ENCODE measurements at regions of chr9 and their contacts with region 1.

Region 1: GRCh38 chr9:104991144-104991953 is 63.4 kb upstream of the ABCA1 start:
- DNase-seq: peak; percentile 83
- H3K4me3 ChIP-seq: peak overlapping the region; percentile 61 to 83 (median 76)
- H3K27ac ChIP-seq: peak overlapping the region; percentile 34
- H3K4me1 ChIP-seq: peaks cover 4% of the 10 kb centered on the region
- H3K27me3 ChIP-seq: no peaks in the 10 kb centered on the region
- CTCF ChIP-seq: no peak
- POLR2A ChIP-seq: peak; percentile 50

Region 2: DNA sequence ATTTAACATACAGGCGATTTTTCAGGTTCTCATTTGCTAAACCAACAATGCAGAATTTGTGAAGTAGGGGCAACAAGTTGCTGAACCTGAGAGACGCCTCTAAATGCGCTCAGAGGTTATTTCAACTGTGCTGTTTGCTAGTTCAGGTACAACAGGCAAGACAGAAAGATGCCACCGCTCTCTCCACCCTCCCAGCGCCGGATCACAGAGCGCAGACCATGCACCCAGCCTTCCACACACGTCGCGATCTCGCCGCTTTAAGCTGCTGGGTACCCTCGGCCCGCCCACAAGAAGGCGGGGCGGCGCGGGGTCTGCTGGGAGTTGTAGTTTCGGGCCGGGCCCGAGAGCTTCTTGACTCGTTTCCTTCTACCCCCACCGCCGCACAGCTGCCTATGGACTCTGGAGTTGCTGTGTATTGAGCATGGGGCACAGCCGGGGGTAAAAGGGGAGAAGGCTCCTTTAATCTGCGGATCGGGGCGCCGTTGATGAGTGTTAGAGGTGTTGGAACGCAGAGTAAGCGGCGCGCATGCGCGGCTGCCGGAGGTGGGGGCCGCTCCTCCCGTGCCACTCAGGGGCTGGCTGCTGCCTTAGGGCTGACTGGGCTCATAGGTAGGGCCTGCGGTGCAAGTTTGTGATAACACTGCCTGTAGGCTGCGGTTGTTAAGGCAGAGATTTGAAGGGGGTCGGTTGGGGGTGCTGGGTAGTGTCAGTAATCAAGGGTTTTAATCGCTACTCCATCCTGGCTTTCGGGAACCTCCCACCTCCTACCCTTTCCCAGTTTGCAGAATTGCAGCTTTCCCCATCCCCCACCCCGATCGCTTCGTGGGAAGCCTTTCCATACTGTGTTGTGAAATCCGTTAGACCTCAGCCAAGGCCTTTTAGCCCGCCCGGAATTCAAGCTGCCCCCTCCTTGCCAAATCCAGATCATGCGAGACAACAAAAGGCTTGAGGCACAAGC is 23.0 kb before region 1 on chr9:
- CTCF ChIA-PET with region 1: interaction called, 6 read pairs
- POLR2A ChIA-PET with region 1: interaction called, 4 read pairs
- dilution Hi-C with region 1: no loop called
- intact Hi-C with region 1: loop called (anchors 1 kb)
- DNase-seq: peak; percentile 86
- H3K4me3 ChIP-seq: peak overlapping the region; percentile 63 to 93 (median 87)
- H3K27ac ChIP-seq: peak overlapping the region; percentile 58
- H3K4me1 ChIP-seq: peaks cover 6% of the 10 kb centered on the region
- H3K27me3 ChIP-seq: peaks cover 3% of the 10 kb centered on the region in 2 experiments
- CTCF ChIP-seq: no peak
- POLR2A ChIP-seq: no peak

Region 3: GRCh38 chr9:105127863-105128220 is 136.5 kb after region 1 on chr9:
- CTCF ChIA-PET with region 1: no interaction called
- POLR2A ChIA-PET with region 1: no interaction called
- dilution Hi-C with region 1: no loop called
- intact Hi-C with region 1: loop called (anchors 5 kb)
- DNase-seq: peak; percentile 70
- H3K4me3 ChIP-seq: no peak overlapping the region
- H3K27ac ChIP-seq: no peak overlapping the region
- H3K4me1 ChIP-seq: no peaks in the 10 kb centered on the region
- H3K27me3 ChIP-seq: no peaks in the 10 kb centered on the region
- CTCF ChIP-seq: no peak
- POLR2A ChIP-seq: no peak

Region 4: GRCh38 chr9:105483618-105484017 is 492.3 kb after region 1 on chr9:
- CTCF ChIA-PET with region 1: no interaction called
- POLR2A ChIA-PET with region 1: no interaction called
- dilution Hi-C with region 1: no loop called
- intact Hi-C with region 1: no loop called
- DNase-seq: no peak
- H3K4me3 ChIP-seq: no peak overlapping the region
- H3K27ac ChIP-seq: no peak overlapping the region
- H3K4me1 ChIP-seq: no peaks in the 10 kb centered on the region
- H3K27me3 ChIP-seq: no peaks in the 10 kb centered on the region
- CTCF ChIP-seq: no peak
- POLR2A ChIP-seq: no peak